Vagina (tissue), 2 donors: ENCODE measurements at regions of chrX and their contacts with region 1.

Region 1: GRCh38 chrX:54999717-55000598 is at the start of gene APEX2:
- DNase-seq: peak in 1 of 2 donors; percentile 91
- H3K4me3 ChIP-seq: peak within 1 kb of the TSS; percentile 53 to 59
- H3K27ac ChIP-seq: peak within 1 kb of the TSS; percentile 76
- H3K4me1 ChIP-seq: no peaks in the 10 kb centered on the region
- H3K27me3 ChIP-seq: no peaks in the 10 kb centered on the region
- CTCF ChIP-seq: no peak
- POLR2A ChIP-seq: peak in 1 of 2 donors; percentile 54
- total RNA-seq, gene APEX2: 14.2 TPM

Region 2: GRCh38 chrX:53695946-53696549 is 1303.9 kb before region 1 on chrX:
- intact Hi-C with region 1: no loop called
- DNase-seq: no peak
- H3K4me3 ChIP-seq: no peak overlapping the region
- H3K27ac ChIP-seq: no peak overlapping the region
- H3K4me1 ChIP-seq: no peaks in the 10 kb centered on the region
- H3K27me3 ChIP-seq: no peaks in the 10 kb centered on the region
- CTCF ChIP-seq: no peak
- POLR2A ChIP-seq: no peak

Region 3: DNA sequence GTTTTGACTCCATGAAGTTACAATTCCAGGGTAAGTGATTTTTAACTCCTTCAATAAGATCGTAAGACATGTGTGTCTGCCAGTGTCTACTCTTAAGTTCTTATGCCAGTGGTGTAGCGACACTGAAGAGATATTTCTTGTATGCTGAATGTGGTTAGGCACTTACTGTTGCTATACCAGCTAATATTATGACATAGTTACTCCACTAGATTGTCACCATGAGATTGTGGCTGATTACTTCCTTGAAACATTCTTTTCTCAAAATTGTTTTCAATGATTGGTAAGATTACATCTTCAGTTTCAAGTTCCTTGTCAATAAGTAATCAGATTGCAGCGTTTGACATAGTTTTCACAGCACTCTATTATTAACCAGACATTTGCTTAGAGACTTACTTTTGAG is 159.6 kb after region 1 on chrX:
- intact Hi-C with region 1: loop called (anchors 10 kb)
- DNase-seq: no peak
- H3K4me3 ChIP-seq: no peak overlapping the region
- H3K27ac ChIP-seq: no peak overlapping the region
- H3K4me1 ChIP-seq: peaks cover 4% of the 10 kb centered on the region
- H3K27me3 ChIP-seq: no peaks in the 10 kb centered on the region
- CTCF ChIP-seq: no peak
- POLR2A ChIP-seq: no peak